Motor neuron (in vitro differentiated cells): ENCODE measurements at regions of chr17 and their contacts with region 1.

Region 1: GRCh38 chr17:969811-970355 is 9.7 kb downstream of the NXN start:
- ATAC-seq: peak in 5 of 8 experiments; percentile 26 to 57 (median 35)
- H3K4me3 ChIP-seq: no peak overlapping the region
- H3K27ac ChIP-seq: peak overlapping the region; percentile 31 to 34
- H3K4me1 ChIP-seq: peaks cover 25 to 26% of the 10 kb centered on the region in 2 donors

Region 2: GRCh38 chr17:801660-802059 is 168.2 kb before region 1 on chr17:
- in situ Hi-C with region 1: loop called in 2 of 9 experiments (anchors 10 to 25 kb)
- ATAC-seq: no peak
- H3K4me3 ChIP-seq: no peak overlapping the region
- H3K27ac ChIP-seq: no peak overlapping the region
- H3K4me1 ChIP-seq: peaks cover 33 to 39% of the 10 kb centered on the region in 2 donors

Region 3: DNA sequence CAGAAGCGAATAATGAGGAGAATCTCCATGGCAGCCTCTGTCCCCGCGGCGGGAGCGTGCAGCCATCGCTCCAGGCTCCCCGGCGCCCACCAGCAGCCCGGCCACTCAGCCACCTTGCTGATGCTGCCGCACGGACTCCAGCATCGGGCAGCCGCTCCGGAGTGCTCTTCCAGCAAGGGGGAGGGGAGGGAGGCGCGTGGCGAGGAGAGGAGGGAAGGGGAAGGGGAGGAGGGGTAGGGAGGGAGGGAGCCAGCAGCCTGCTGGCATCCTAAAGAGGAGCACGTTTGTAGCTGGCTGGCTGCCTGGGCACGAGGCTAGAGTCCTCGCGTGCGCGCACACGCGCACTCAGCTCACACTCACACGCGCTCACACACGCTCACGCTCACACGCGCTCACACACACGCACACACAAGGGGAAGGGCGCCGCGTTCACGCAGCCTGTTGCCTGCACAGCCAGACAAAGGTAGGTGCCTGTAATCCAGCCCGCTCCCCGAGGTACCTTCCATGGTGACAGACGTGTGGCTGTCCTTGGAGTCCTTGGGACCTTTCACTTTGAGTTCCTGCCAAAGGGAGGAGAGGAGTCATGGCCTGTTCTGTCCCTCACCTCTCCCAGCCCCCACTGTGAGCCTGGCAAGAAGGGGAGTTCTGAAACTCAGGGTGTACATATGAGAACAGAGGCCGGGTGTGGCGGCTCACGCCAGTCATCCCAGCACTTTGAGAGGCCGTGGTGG is 109.1 kb after region 1 on chr17:
- in situ Hi-C with region 1: no loop called
- ATAC-seq: peak in 5 of 8 experiments; percentile 51 to 75 (median 73)
- H3K4me3 ChIP-seq: peak overlapping the region in 1 of 5 donors; percentile 16
- H3K27ac ChIP-seq: peak overlapping the region in 1 of 2 donors; percentile 7
- H3K4me1 ChIP-seq: peaks cover 24 to 27% of the 10 kb centered on the region in 2 donors